ENCODE measurements at regions of chr20 and their contacts with region 1.

Region 1: GRCh38 chr20:36550797-36551299 is 9.5 kb downstream of the MYL9 start:
- DNase-seq: no peak
- ATAC-seq: peak; percentile 29

Region 2: GRCh38 chr20:36591854-36592641 is 41.2 kb after region 1 on chr20:
- intact Hi-C with region 1: loop called (anchors 5 kb)
- DNase-seq: no peak
- ATAC-seq: no peak